Posterior vena cava (tissue), 2 donors: ENCODE measurements at regions of chr16 and their contacts with region 1.

Region 1: DNA sequence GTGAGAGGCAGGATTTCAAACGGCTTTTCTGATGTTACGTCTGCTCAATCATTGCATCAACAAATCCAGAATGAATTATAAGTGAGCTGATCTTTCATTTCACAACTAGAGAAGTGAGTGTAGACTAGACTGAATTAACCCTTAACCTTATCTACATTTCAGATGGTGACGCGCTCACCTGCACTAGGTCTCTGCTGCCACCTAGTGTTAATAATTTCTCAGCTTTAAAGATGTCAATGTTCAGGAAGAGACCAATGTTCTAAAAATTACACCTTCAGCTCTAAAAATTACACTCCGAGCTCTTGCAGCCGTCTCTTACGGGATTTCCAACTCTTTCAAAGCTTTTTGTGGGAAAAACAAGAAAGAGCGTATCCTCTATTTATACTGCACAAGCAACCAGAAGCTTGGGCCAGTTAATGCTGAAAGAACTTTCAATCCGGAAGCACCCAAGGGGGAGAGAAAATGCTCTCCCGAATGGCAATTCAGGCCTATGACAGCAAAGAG is 88.2 kb upstream of the FA2H start:
- DNase-seq: no peak

Region 2: DNA sequence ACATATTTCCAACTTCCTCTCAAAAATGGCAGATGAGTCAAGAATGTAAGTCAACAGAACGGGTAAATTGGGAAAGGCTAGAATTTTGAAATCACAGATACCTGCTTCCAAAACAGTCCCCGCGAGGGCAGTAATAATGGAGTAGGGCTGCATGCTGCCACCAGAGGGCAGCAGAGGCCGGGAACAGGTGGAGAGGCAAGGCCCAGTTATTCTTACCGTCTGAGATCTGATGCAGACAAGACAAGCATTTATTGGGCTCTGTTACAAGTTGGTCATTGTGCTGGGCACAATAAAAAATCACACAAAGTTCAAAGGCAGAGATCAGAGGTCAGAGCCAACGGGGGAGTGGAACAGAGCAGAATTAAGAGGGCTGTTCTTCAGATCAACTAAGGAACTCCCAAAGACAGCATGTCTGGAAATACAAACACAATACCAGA is 153.3 kb before region 1 on chr16:
- intact Hi-C with region 1: loop called (anchors 10 kb)
- DNase-seq: peak; percentile 92

Region 3: DNA sequence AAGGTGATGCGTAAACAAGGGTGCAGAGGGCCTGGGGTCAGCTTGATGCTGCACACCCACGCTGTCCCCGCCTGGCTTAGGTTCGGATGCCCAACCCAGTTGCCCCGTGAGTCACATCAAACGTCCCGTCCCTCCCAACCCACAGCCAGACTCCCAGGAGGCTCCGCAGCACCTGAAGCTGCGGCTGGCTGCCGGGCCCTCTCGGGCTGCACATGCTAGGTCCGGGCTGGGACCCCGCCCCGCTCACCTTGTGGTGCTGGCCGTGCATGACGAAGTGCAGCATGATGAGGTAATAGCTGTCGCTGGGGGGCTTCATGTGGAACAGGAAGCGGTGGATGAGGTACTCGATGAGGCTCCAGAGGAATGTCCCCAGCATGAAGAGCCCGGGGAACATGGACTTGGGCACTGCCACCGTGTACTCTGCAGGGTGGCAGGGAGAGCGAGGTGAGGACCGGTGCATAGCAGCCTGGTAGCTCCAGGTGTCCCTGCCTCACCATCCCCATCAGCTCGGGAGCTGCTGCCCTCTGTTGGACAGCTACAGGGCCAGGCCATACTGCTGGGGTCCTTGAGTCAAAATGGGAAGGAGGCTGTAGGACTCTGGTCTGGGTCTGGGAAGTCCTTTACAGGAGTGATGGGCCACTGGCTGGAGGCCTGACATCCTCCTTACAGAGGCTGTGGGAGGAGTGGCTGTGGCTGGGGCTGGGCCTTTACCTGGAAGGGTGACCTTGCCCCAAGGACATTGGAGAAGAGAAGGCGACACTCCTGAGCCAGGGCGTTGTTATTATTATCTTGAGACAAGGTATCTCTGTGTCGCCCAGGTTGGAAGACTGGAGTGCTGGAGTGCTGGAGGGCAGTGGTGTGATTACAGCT is 143.8 kb before region 1 on chr16:
- intact Hi-C with region 1: loop called in 1 of 2 experiments (anchors 10 kb)
- DNase-seq: no peak